ENCODE measurements at regions of chr9 and their contacts with region 1.

Region 1: GRCh38 chr9:15552636-15553527 is at the start of gene CCDC171:
- DNase-seq: peak; percentile 92
- H3K4me3 Mint-ChIP-seq: peak within 1 kb of the TSS; percentile 79
- H3K27ac Mint-ChIP-seq: peak within 1 kb of the TSS; percentile 61
- H3K4me1 Mint-ChIP-seq: peaks cover 11% of the 10 kb centered on the region
- H3K27me3 Mint-ChIP-seq: no peaks in the 10 kb centered on the region
- total RNA-seq, gene CCDC171: 2.5 to 2.7 TPM

Region 2: GRCh38 chr9:15295761-15296405 is 257.0 kb before region 1 on chr9:
- CTCF ChIA-PET with region 1: no interaction called
- POLR2A ChIA-PET with region 1: no interaction called
- intact Hi-C with region 1: loop called (anchors 1 kb)
- DNase-seq: peak; percentile 37
- H3K4me3 Mint-ChIP-seq: peak overlapping the region; percentile 69
- H3K27ac Mint-ChIP-seq: peak overlapping the region; percentile 97
- H3K4me1 Mint-ChIP-seq: peaks cover 84% of the 10 kb centered on the region
- H3K27me3 Mint-ChIP-seq: no peaks in the 10 kb centered on the region

Region 3: DNA sequence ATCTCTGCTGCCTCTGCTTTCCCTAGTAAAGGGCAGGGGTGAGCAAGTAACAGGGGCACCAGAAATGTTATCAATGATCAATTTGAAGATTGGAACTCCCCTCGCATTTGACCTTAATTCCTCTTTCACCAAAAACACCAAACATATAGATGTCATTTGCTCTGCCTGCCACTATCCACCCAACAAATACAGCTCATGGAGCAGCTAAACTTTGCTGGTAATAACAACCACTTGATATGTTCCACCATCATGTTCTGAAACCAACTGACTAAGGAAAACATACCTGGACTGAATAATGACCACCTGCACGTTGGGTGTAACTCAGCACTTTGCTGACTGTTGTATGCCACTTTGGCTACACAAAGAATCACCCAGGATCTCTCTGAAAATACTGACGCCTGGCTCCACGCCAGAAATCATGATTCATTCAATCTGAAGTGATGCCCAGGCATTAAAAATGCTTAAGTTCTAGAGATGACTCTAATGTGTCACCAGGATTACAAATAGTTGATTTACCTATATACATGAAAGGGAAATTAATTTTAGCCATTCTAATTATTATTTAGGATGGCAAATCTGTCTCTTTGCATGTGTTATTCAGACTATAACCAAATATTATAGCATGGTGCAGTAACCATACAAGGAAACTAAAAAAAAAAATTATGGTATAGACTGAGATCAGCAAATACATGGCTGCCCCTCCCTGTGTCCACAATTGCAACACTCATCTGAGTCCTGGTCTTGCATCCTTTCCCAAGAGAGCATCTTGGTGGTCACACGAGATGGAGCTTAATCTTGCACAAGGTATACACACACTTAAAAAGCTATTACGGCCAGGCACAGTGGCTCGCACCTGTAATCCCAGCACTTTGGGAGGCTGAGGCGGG is 202.7 kb before region 1 on chr9:
- CTCF ChIA-PET with region 1: no interaction called
- POLR2A ChIA-PET with region 1: no interaction called
- intact Hi-C with region 1: loop called (anchors 5 kb)
- DNase-seq: peak; percentile 17
- H3K4me3 Mint-ChIP-seq: no peak overlapping the region
- H3K27ac Mint-ChIP-seq: no peak overlapping the region
- H3K4me1 Mint-ChIP-seq: peaks cover 13% of the 10 kb centered on the region
- H3K27me3 Mint-ChIP-seq: no peaks in the 10 kb centered on the region

Region 4: GRCh38 chr9:15485836-15486666 is 66.8 kb before region 1 on chr9:
- CTCF ChIA-PET with region 1: interaction called, 3 read pairs
- POLR2A ChIA-PET with region 1: no interaction called
- intact Hi-C with region 1: loop called (anchors 5 kb)
- DNase-seq: no peak
- H3K4me3 Mint-ChIP-seq: no peak overlapping the region
- H3K27ac Mint-ChIP-seq: peak overlapping the region; percentile 49
- H3K4me1 Mint-ChIP-seq: peaks cover 37% of the 10 kb centered on the region
- H3K27me3 Mint-ChIP-seq: no peaks in the 10 kb centered on the region

Region 5: GRCh38 chr9:15642369-15642962 is 89.6 kb after region 1 on chr9:
- CTCF ChIA-PET with region 1: interaction called, 3 read pairs
- POLR2A ChIA-PET with region 1: no interaction called
- intact Hi-C with region 1: loop called (anchors 1 kb)
- DNase-seq: no peak
- H3K4me3 Mint-ChIP-seq: no peak overlapping the region
- H3K27ac Mint-ChIP-seq: no peak overlapping the region
- H3K4me1 Mint-ChIP-seq: no peaks in the 10 kb centered on the region
- H3K27me3 Mint-ChIP-seq: peaks cover 5% of the 10 kb centered on the region